ENCODE measurements at regions of chr13 and their contacts with region 1.

Region 1: DNA sequence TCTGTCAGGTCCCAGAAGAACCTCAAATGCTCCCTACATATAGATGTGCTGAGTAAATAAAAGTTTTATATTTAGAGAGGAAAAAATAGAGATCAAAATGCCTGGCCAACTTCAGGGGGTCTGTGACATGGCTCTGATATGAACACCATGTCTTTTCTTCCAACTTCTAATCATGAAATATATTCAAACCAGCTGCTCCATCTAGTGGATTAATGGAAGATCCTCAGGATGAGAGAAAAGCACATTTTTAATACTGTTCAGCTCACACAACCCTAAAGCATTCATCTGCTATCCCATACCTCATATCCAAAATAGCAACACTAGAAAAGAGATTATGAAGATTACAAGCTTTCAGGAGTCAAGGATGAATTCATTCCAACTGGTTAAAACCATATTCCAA is 56.0 kb upstream of the DOCK9 start:
- DNase-seq: no peak
- H3K4me3 Mint-ChIP-seq: no peak overlapping the region
- H3K27ac Mint-ChIP-seq: no peak overlapping the region
- H3K4me1 Mint-ChIP-seq: peaks cover 57% of the 10 kb centered on the region
- H3K27me3 Mint-ChIP-seq: no peaks in the 10 kb centered on the region

Region 2: DNA sequence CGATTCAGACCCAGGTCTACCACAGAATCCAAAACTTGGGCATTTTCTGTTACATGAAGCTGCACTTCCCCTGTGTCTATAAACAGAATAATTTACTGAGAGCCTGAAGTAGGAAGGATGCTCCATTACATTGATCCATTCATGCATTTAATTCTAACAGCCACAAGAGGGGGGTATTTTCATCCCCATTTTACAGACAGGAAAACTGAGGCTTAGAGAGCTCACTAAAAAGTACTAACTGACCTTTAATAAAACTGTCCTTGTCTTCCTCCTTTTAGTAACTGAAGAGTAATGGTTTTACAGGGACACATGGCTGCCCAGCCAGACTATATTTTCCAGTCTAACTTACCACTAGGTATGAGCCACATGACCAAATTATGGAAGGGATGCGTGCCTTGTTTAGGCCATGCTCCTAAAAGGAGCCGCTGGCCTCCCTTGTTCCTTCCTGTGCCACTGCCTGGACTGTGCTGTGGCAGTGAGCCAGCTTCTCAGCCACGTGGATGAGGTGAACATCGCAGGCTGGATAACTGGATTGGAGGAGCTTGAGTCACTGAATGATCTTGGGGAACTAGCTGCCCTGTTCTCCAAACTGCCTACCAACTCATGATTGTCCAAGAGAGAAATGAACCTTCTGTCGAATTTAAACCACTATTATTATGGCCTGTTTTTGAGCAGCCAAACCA is 164.3 kb before region 1 on chr13:
- CTCF ChIA-PET with region 1: interaction called, 50 read pairs
- POLR2A ChIA-PET with region 1: no interaction called
- intact Hi-C with region 1: no loop called
- DNase-seq: no peak
- H3K4me3 Mint-ChIP-seq: no peak overlapping the region
- H3K27ac Mint-ChIP-seq: no peak overlapping the region
- H3K4me1 Mint-ChIP-seq: peaks cover 11% of the 10 kb centered on the region
- H3K27me3 Mint-ChIP-seq: no peaks in the 10 kb centered on the region

Region 3: GRCh38 chr13:99018418-99019180 is 15.2 kb before region 1 on chr13:
- CTCF ChIA-PET with region 1: interaction called, 30 read pairs
- POLR2A ChIA-PET with region 1: no interaction called
- intact Hi-C with region 1: no loop called
- DNase-seq: no peak
- H3K4me3 Mint-ChIP-seq: no peak overlapping the region
- H3K27ac Mint-ChIP-seq: peak overlapping the region; percentile 78
- H3K4me1 Mint-ChIP-seq: peaks cover 64% of the 10 kb centered on the region
- H3K27me3 Mint-ChIP-seq: no peaks in the 10 kb centered on the region